Ascending aorta (tissue), 2 donors: ENCODE measurements at regions of chr11 and their contacts with region 1.

Region 1: GRCh38 chr11:84106555-84106954 is 820.4 kb upstream of the CCDC90B start:
- DNase-seq: no peak
- H3K4me3 ChIP-seq: no peak overlapping the region
- H3K27ac ChIP-seq: no peak overlapping the region
- H3K4me1 ChIP-seq: no peaks in the 10 kb centered on the region
- H3K27me3 ChIP-seq: no peaks in the 10 kb centered on the region
- CTCF ChIP-seq: no peak

Region 2: GRCh38 chr11:84130646-84131420 is 24.3 kb after region 1 on chr11:
- intact Hi-C with region 1: loop called (anchors 1 kb)
- DNase-seq: no peak
- H3K4me3 ChIP-seq: no peak overlapping the region
- H3K27ac ChIP-seq: no peak overlapping the region
- H3K4me1 ChIP-seq: no peaks in the 10 kb centered on the region
- H3K27me3 ChIP-seq: no peaks in the 10 kb centered on the region
- CTCF ChIP-seq: no peak